A549 (cell line): ENCODE measurements at regions of chr14 and their contacts with region 1.

Region 1: DNA sequence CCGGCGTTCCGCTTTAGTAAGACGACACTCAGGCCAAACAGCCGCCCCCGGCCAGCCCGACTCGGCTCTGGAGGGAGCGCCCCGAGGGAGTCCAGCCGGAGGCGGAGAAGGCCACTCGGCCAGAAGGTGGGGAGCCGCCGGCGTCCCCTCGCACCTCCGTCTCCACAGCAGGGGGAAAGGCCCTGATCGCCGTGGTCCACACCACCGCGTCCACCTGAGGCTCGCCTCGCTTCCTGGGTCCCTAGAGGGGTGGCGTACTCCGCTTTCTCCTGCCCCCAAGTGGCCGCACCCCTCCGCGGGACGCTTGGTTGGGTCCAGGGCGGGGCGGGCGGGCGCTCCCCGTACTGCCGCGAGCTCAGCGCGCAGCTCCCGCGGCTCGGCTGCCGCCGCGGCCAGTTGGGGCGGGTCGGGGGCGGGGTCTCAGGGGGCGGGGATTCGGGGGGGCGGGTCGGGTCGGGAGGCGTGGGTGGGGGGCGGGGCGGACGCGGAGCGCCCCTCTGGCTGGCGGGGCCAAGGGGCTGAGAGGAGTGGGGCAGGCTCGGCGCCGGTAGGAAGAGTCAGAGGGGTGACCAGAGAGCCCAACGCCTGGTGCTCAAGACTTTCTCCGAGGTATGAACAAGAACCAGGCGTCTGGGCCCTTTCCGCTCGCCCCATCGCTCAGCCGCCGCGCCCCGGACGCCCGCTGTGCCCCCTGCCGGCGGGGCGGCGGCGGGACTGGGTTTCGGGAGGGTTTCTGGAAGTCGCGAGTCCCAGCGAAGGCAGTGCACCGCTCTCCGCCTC is at the start of gene FRMD6:
- DNase-seq: peak; percentile 69 to 89
- ATAC-seq: peak; percentile 84 to 85
- H3K4me3 ChIP-seq: peak within 1 kb of the TSS; percentile 52
- H3K27ac ChIP-seq: peak within 1 kb of the TSS; percentile 96 to 97
- H3K4me1 ChIP-seq: peaks cover 43% of the 10 kb centered on the region
- CTCF ChIP-seq: peak; percentile 72
- EP300 ChIP-seq: no peak
- POLR2A ChIP-seq: peak; percentile 72
- RAD21 ChIP-seq: peak; percentile 32 to 63
- polyA plus RNA-seq, gene FRMD6: 23.1 and 23.5 TPM in 2 replicates

Region 2: DNA sequence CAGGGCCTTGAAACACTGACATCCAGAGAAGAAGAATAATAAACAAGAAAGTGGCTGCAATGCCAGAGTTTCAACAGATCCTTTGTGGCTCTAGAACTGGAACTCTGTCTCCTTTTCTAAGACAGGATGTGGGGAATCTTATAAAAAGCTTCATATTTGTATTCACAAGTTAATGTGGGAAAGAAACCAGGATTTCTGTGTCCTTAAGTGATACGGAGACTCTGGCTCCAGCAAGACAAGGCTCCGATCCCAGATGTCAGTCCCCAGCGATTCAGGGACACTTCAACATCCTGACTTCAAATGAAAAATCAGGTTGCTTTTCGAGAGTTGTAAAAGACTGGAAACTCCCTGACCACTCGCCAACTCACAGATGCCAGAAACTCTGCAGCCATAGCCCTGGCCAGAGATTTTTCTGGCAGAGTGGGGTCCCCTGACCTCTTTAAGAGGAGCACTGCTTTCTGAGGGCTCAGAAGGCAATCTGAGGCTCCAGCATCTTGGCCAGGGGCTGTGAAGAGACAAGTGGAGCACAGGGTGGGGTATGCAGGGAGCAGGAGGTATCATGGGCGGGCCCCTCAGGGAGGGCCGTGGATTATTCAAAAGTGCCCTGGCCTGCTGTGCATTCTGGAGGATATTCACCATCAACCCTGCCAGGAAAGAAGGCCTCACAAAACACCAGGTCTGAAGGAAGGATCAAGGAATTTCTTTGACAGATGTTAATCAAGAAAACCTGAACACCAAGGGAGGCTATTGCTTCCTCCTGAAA is 358.2 kb before region 1 on chr14:
- CTCF ChIA-PET with region 1: interaction called, 10 read pairs
- POLR2A ChIA-PET with region 1: no interaction called
- DNase-seq: no peak
- ATAC-seq: no peak
- H3K4me3 ChIP-seq: no peak overlapping the region
- H3K27ac ChIP-seq: no peak overlapping the region
- H3K4me1 ChIP-seq: peaks cover 6% of the 10 kb centered on the region; the same call in 1 of the 3 replicates
- CTCF ChIP-seq: no peak
- EP300 ChIP-seq: no peak
- POLR2A ChIP-seq: no peak
- RAD21 ChIP-seq: no peak

Region 3: DNA sequence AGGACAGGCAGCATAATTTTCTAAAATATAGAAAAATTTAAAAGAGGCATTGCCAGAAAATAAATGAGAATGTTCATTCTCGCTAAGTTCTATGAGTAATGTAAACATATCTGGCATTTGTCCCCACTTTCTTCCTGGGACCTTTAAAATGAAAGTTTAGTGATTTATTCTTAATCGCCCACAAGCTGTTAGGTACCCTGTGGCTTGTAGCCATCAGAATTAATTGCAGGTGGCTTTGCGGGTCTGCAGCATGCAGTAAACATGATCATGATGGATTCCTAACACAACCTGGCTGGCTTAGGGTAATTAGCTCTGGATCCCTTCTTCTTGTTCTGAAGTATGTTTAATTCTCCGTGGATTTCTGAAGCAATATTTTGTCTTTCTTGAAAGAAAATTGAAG is 103.4 kb before region 1 on chr14:
- CTCF ChIA-PET with region 1: interaction called, 12 read pairs
- POLR2A ChIA-PET with region 1: interaction called, 6 read pairs
- DNase-seq: no peak
- ATAC-seq: no peak
- H3K4me3 ChIP-seq: no peak overlapping the region
- H3K27ac ChIP-seq: peak overlapping the region; percentile 71 to 75
- H3K4me1 ChIP-seq: peaks cover 48% of the 10 kb centered on the region
- CTCF ChIP-seq: no peak
- EP300 ChIP-seq: no peak
- POLR2A ChIP-seq: no peak
- RAD21 ChIP-seq: no peak

Region 4: DNA sequence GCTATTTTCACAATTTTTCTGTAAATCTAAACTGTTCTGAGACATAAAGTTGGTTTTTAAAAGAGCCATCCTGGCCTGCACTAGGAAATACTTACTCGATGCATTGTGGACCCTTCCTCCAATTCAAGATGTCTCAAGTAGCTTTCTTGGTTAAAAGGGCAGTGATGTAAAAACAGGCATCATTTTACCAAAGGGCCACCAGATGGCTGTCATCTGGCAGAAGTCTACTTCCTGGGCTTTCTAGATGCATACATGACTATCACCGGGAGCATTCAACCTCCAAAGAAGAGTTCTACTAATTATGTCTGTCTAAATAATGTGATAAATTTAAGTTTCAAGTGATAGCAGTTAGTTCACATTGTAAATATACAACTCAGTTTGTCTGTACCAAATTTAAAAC is 96.6 kb before region 1 on chr14:
- CTCF ChIA-PET with region 1: interaction called, 12 read pairs
- POLR2A ChIA-PET with region 1: interaction called, 6 read pairs
- DNase-seq: peak in 1 of 2 experiments; percentile 45
- ATAC-seq: peak; percentile 58 to 61; a peak in 4 of 6 replicates
- H3K4me3 ChIP-seq: no peak overlapping the region
- H3K27ac ChIP-seq: peak overlapping the region; percentile 60 to 64
- H3K4me1 ChIP-seq: peaks cover 32% of the 10 kb centered on the region
- CTCF ChIP-seq: peak; percentile 34; the same call in 2 of the 3 replicates
- EP300 ChIP-seq: no peak
- POLR2A ChIP-seq: no peak
- RAD21 ChIP-seq: peak; percentile 29 to 39; a peak in 2 of 5 replicates

Region 5: GRCh38 chr14:51638071-51638944 is 13.3 kb before region 1 on chr14:
- CTCF ChIA-PET with region 1: interaction called, 20 read pairs
- POLR2A ChIA-PET with region 1: interaction called, 10 read pairs
- DNase-seq: peak; percentile 68 to 76
- ATAC-seq: peak; percentile 98 to 99
- H3K4me3 ChIP-seq: no peak overlapping the region
- H3K27ac ChIP-seq: peak overlapping the region; percentile 1 to 65; a peak in 3 of 6 replicates
- H3K4me1 ChIP-seq: peaks cover 25% of the 10 kb centered on the region
- CTCF ChIP-seq: no peak
- EP300 ChIP-seq: no peak
- POLR2A ChIP-seq: no peak
- RAD21 ChIP-seq: no peak

Region 6: GRCh38 chr14:51666826-51667225 is 15.2 kb after region 1 on chr14:
- CTCF ChIA-PET with region 1: interaction called, 21 read pairs
- POLR2A ChIA-PET with region 1: interaction called, 4 read pairs
- DNase-seq: no peak
- ATAC-seq: no peak
- H3K4me3 ChIP-seq: no peak overlapping the region
- H3K27ac ChIP-seq: no peak overlapping the region
- H3K4me1 ChIP-seq: no peaks in the 10 kb centered on the region
- CTCF ChIP-seq: no peak
- EP300 ChIP-seq: no peak
- POLR2A ChIP-seq: no peak
- RAD21 ChIP-seq: no peak

Region 7: GRCh38 chr14:51792819-51793218 is 141.2 kb after region 1 on chr14:
- CTCF ChIA-PET with region 1: no interaction called
- POLR2A ChIA-PET with region 1: no interaction called
- DNase-seq: no peak
- ATAC-seq: no peak
- H3K4me3 ChIP-seq: no peak overlapping the region
- H3K27ac ChIP-seq: no peak overlapping the region
- H3K4me1 ChIP-seq: no peaks in the 10 kb centered on the region
- CTCF ChIP-seq: no peak
- EP300 ChIP-seq: no peak
- POLR2A ChIP-seq: no peak
- RAD21 ChIP-seq: no peak